ENCODE measurements at regions of chr5 and their contacts with region 1.

Region 1: GRCh38 chr5:142699184-142699720 is 13.4 kb upstream of the FGF1 start:
- DNase-seq: peak; percentile 25
- H3K4me3 ChIP-seq: no peak overlapping the region
- H3K27ac ChIP-seq: peak overlapping the region in 3 of 4 donors; percentile 49 to 74 (median 74)
- H3K4me1 ChIP-seq: peaks cover 0 to 23% (median 23%) of the 10 kb centered on the region in 3 donors
- H3K27me3 ChIP-seq: peaks cover 0 to 3% (median 0%) of the 10 kb centered on the region in 4 donors
- CTCF ChIP-seq: peak; percentile 59 to 98 (median 96)
- POLR2A ChIP-seq: no peak

Region 2: GRCh38 chr5:142587354-142587965 is 111.8 kb before region 1 on chr5:
- intact Hi-C with region 1: no loop called
- DNase-seq: no peak
- H3K4me3 ChIP-seq: no peak overlapping the region
- H3K27ac ChIP-seq: no peak overlapping the region
- H3K4me1 ChIP-seq: no peaks in the 10 kb centered on the region
- H3K27me3 ChIP-seq: peaks cover 0 to 26% (median 0%) of the 10 kb centered on the region in 4 donors
- CTCF ChIP-seq: peak in 2 of 6 experiments; percentile 28 to 40
- POLR2A ChIP-seq: no peak

Region 3: GRCh38 chr5:142611154-142611553 is 88.1 kb before region 1 on chr5:
- intact Hi-C with region 1: loop called (anchors 5 kb)
- DNase-seq: no peak
- H3K4me3 ChIP-seq: no peak overlapping the region
- H3K27ac ChIP-seq: no peak overlapping the region
- H3K4me1 ChIP-seq: no peaks in the 10 kb centered on the region
- H3K27me3 ChIP-seq: no peaks in the 10 kb centered on the region
- CTCF ChIP-seq: peak; percentile 31 to 94 (median 85)
- POLR2A ChIP-seq: no peak

Region 4: GRCh38 chr5:142654578-142655058 is 44.6 kb before region 1 on chr5:
- intact Hi-C with region 1: loop called (anchors 5 kb)
- DNase-seq: no peak
- H3K4me3 ChIP-seq: no peak overlapping the region
- H3K27ac ChIP-seq: peak overlapping the region in 2 of 4 donors; percentile 58 to 60
- H3K4me1 ChIP-seq: peaks cover 0 to 17% (median 0%) of the 10 kb centered on the region in 3 donors
- H3K27me3 ChIP-seq: no peaks in the 10 kb centered on the region
- CTCF ChIP-seq: peak in 1 of 6 experiments; percentile 8
- POLR2A ChIP-seq: no peak